MCF 10A (cell line): ENCODE measurements at regions of chr17 and their contacts with region 1.

Region 1: GRCh38 chr17:1783834-1784611 is 22.2 kb downstream of the SERPINF1 start:
- DNase-seq: peak; percentile 62
- H3K4me3 Mint-ChIP-seq: no peak overlapping the region
- H3K27ac Mint-ChIP-seq: peak overlapping the region; percentile 79
- H3K4me1 Mint-ChIP-seq: peaks cover 28% of the 10 kb centered on the region
- H3K27me3 Mint-ChIP-seq: no peaks in the 10 kb centered on the region
- CTCF ChIP-seq: peak; percentile 74

Region 2: DNA sequence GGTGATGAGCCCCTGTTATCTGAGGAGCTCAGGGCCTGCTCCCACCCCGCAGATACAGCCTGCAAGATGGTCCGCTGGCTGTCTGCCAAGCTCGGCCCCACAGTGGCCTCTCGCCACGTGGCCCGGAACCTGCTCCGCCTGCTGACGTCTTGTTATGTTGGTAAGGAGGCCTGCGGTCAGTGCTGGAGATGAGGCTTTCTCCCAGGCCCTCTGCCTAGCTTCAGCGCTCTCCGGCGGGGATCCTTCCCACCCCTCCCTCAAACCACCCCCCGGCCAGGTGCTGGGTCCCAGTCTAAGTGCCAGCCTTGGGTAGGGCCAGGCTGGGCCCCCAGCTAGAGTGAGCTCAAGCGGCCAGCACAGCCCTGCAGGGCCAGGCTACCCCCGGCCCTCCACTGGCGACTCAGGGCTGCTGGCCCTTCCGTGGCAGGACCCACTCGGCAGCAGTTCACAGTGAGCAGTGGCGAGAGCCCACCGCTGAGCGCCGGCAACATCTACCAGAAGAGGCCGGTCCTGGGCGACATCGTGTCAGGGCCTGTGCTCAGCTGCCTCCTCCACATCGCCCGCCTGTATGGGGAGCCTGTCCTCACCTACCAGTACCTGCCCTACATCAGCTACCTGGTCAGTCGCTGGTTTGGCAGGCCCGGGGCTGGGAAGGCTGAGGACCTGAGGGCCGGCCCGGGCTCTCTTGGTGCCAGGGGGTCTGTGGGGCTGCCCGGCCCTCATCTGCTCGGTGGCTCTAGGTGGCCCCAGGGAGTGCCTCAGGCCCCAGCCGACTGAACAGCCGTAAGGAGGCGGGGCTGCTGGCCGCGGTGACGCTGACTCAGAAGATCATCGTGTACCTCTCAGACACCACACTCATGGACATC is 53.5 kb before region 1 on chr17:
- CTCF ChIA-PET with region 1: interaction called, 23 read pairs
- POLR2A ChIA-PET with region 1: interaction called, 11 read pairs
- intact Hi-C with region 1: loop called (anchors 2 kb)
- DNase-seq: peak; percentile 70
- H3K4me3 Mint-ChIP-seq: peak overlapping the region; percentile 47
- H3K27ac Mint-ChIP-seq: peak overlapping the region; percentile 81
- H3K4me1 Mint-ChIP-seq: peaks cover 25% of the 10 kb centered on the region
- H3K27me3 Mint-ChIP-seq: no peaks in the 10 kb centered on the region
- CTCF ChIP-seq: no peak

Region 3: DNA sequence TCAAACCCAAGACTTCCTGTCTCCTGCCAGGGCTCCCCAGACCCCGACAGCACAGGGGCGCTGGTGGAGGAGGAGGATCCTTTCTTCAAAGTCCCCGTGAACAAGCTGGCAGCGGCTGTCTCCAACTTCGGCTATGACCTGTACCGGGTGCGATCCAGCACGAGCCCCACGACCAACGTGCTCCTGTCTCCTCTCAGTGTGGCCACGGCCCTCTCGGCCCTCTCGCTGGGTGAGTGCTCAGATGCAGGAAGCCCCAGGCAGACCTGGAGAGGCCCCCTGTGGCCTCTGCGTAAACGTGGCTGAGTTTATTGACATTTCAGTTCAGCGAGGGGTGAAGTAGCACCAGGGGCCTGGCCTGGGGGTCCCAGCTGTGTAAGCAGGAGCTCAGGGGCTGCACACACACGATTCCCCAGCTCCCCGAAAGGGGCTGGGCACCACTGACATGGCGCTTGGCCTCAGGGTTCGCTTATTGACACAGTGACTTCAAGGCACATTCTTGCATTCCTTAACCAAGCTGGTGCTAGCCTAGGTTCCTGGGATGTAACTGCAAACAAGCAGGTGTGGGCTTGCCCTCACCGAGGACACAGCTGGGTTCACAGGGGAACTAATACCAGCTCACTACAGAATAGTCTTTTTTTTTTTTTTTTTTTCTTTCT is 14.1 kb before region 1 on chr17:
- CTCF ChIA-PET with region 1: interaction called, 19 read pairs
- POLR2A ChIA-PET with region 1: interaction called, 45 read pairs
- intact Hi-C with region 1: no loop called
- DNase-seq: peak; percentile 70
- H3K4me3 Mint-ChIP-seq: no peak overlapping the region
- H3K27ac Mint-ChIP-seq: peak overlapping the region; percentile 71
- H3K4me1 Mint-ChIP-seq: peaks cover 11% of the 10 kb centered on the region
- H3K27me3 Mint-ChIP-seq: no peaks in the 10 kb centered on the region
- CTCF ChIP-seq: no peak